CD14-positive monocyte (primary cell): ENCODE measurements at regions of chr14 and their contacts with region 1.

Region 1: DNA sequence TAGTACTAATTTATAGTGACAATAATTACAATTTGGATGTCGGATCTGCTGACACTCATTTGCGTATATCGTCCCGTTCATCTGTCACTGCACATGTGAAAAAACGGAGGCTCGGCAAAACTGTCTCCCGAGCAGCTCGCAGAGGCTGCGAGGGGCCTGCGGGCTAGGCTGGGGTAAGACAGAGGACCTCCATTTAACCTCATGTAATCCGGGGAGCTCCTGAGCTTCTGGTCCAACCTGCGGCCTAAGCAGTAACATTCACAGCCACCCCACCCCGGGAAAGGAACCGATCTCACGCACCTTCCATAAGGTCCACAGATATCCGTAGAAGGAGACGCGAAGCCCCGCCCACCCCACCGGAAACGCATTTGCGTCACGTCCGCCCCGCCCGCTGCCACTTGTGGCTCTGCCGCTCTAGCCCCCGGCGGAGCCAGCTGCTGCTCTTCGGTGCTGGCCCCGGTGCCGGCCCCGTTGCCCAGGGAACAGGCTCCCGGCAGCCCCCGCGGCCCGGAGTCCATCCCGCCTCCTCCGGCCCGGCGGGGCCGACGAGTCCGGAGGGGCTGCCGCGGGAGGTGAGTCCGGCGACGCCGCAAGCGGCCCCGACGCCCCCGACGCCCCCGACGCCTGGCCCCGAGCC is at the starts of genes CINP and TECPR2:
- DNase-seq: peak; percentile 94
- H3K4me3 ChIP-seq: peak within 1 kb of the TSS; percentile 90 to 95 (median 94)
- H3K4me3 Mint-ChIP-seq: peak within 1 kb of the TSS; percentile 94 to 96
- H3K27ac ChIP-seq: peak within 1 kb of the TSS; percentile 92 to 100
- H3K27ac Mint-ChIP-seq: peak within 1 kb of the TSS in 6 of 7 donors; percentile 96 to 99 (median 98)
- H3K4me1 ChIP-seq: peaks cover 22 to 31% of the 10 kb centered on the region in 2 donors
- H3K4me1 Mint-ChIP-seq: peaks cover 15% of the 10 kb centered on the region
- H3K27me3 ChIP-seq: no peaks in the 10 kb centered on the region
- H3K27me3 Mint-ChIP-seq: peaks cover 0 to 2% (median 0%) of the 10 kb centered on the region in 3 donors
- CTCF ChIP-seq: no peak
- polyA plus RNA-seq, gene CINP: 28.9 to 58.5 (median 57.1) TPM
- polyA plus RNA-seq, gene TECPR2: 2.8 to 10.4 (median 6.4) TPM

Region 2: GRCh38 chr14:102086972-102087761 is 275.5 kb before region 1 on chr14 and contains the start of gene HSP90AA1:
- intact Hi-C with region 1: loop called in 1 of 2 experiments (anchors 5 kb)
- DNase-seq: peak; percentile 89 to 93 (median 92)
- H3K4me3 ChIP-seq: peak within 1 kb of the TSS; percentile 68 to 88 (median 69)
- H3K4me3 Mint-ChIP-seq: peak within 1 kb of the TSS; percentile 94 to 95
- H3K27ac ChIP-seq: peak within 1 kb of the TSS; percentile 83 to 91
- H3K27ac Mint-ChIP-seq: peak within 1 kb of the TSS; percentile 89 to 97 (median 95)
- H3K4me1 ChIP-seq: peaks cover 25 to 47% of the 10 kb centered on the region in 2 donors
- H3K4me1 Mint-ChIP-seq: peaks cover 54% of the 10 kb centered on the region
- H3K27me3 ChIP-seq: no peaks in the 10 kb centered on the region
- H3K27me3 Mint-ChIP-seq: peaks cover 4 to 6% (median 5%) of the 10 kb centered on the region in 3 donors
- CTCF ChIP-seq: no peak
- polyA plus RNA-seq, gene HSP90AA1: 149 to 211 (median 180) TPM

Region 3: GRCh38 chr14:102421411-102422053 is 58.9 kb after region 1 on chr14:
- intact Hi-C with region 1: no loop called
- DNase-seq: no peak
- H3K4me3 ChIP-seq: no peak overlapping the region
- H3K4me3 Mint-ChIP-seq: no peak overlapping the region
- H3K27ac ChIP-seq: no peak overlapping the region
- H3K27ac Mint-ChIP-seq: peak overlapping the region in 1 of 7 donors; percentile 16
- H3K4me1 ChIP-seq: no peaks in the 10 kb centered on the region
- H3K4me1 Mint-ChIP-seq: no peaks in the 10 kb centered on the region
- H3K27me3 ChIP-seq: no peaks in the 10 kb centered on the region
- H3K27me3 Mint-ChIP-seq: peaks cover 0 to 1% (median 0%) of the 10 kb centered on the region in 3 donors
- CTCF ChIP-seq: no peak

Region 4: DNA sequence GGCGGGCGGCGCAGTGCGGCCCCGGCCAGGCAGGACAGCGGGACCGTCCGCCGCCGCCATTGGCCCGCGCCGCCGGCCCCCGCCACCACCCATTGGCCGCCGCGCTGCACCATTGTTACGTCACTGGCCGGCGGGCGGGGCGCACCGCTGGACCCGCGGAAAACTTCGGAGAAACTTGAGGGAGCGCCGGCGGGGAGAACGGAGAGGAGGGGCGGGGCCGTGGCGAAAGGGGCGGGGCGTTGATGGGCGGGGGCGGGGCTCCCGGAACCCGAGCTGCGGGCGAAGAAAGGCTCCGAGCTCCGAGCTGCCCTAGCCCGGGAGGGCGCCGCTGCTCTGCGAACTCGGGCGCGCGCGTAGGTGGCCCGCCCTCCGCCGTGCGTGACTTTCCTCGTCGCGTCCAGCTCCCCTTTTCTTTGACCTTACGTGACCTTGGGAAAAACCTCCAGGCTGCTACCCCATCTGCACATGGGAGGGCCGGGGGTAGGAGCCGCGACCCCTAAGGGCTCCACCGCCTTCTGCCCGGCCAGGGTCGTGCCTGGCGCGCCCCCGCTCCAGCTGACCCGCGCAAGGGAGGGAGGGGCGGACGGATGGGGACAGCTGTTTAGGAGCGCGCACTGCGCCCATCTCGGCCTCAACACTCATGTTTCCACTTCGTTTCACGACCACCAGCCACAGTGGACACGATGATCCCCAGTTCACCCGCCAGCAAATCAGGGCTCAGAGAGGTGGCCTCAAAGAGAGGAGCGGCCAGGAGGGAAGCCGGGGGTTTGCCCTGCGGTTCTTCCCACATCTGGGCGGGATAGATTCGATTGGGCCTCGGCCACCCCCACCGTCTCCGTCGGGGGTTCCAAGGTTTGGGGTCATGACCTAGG is 147.3 kb after region 1 on chr14 and contains the start of gene ANKRD9:
- intact Hi-C with region 1: loop called (anchors 10 kb)
- DNase-seq: peak; percentile 88 to 94 (median 94)
- H3K4me3 ChIP-seq: peak within 1 kb of the TSS; percentile 56 to 83 (median 57)
- H3K4me3 Mint-ChIP-seq: peak within 1 kb of the TSS; percentile 84 to 93
- H3K27ac ChIP-seq: peak within 1 kb of the TSS in 1 of 2 donors; percentile 70
- H3K27ac Mint-ChIP-seq: peak within 1 kb of the TSS; percentile 79 to 92 (median 84)
- H3K4me1 ChIP-seq: peaks cover 16 to 19% of the 10 kb centered on the region in 2 donors
- H3K4me1 Mint-ChIP-seq: peaks cover 19% of the 10 kb centered on the region
- H3K27me3 ChIP-seq: peaks cover 0 to 4% of the 10 kb centered on the region in 2 donors
- H3K27me3 Mint-ChIP-seq: peaks cover 4 to 13% (median 4%) of the 10 kb centered on the region in 3 donors
- CTCF ChIP-seq: no peak
- polyA plus RNA-seq, gene ANKRD9: 0.43 to 10.8 (median 0.83) TPM